ENCODE measurements at regions of chr13 and their contacts with region 1.

Region 1: DNA sequence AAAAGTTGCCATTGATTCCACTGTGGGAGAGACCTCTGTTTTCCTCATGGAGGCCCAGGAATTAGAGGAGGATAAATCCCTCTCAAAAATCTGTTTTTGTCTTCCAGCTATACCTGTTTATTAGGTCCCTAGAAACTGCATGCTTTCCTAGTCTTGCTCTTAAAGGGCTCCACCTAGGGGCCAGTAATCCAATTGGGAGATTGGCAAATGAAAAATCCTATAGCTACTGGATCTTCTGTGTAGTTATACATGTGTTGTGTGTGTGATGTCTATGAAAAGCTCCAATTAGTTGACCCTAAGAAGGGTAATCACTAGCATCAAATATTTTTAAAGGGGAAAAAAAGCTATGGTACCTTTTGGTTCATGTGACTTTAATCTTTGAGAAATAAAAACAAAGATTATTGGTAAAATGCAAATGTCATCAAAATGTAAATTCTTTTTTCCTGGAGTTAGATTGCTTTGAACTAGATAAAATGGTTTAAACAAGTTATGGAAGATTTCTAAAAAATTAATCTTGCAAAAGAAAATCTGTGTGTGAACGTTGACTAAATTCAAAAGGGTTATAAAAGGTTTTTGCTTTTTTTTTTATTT is 63.4 kb upstream of the C1QTNF9B start:
- DNase-seq: no peak
- H3K4me3 ChIP-seq: no peak overlapping the region
- H3K27ac ChIP-seq: no peak overlapping the region
- H3K27me3 ChIP-seq: no peaks in the 10 kb centered on the region
- CTCF ChIP-seq: peak; percentile 94

Region 2: GRCh38 chr13:23579072-23579895 is 381.4 kb before region 1 on chr13:
- CTCF ChIA-PET with region 1: no interaction called
- POLR2A ChIA-PET with region 1: no interaction called
- DNase-seq: peak; percentile 53
- H3K4me3 ChIP-seq: peak overlapping the region; percentile 84
- H3K27ac ChIP-seq: peak overlapping the region; percentile 53
- H3K27me3 ChIP-seq: no peaks in the 10 kb centered on the region
- CTCF ChIP-seq: no peak

Region 3: GRCh38 chr13:23921451-23921888 is 39.2 kb before region 1 on chr13:
- CTCF ChIA-PET with region 1: interaction called, 29 read pairs
- POLR2A ChIA-PET with region 1: interaction called, 3 read pairs
- DNase-seq: peak; percentile 6
- H3K4me3 ChIP-seq: no peak overlapping the region
- H3K27ac ChIP-seq: no peak overlapping the region
- H3K27me3 ChIP-seq: no peaks in the 10 kb centered on the region
- CTCF ChIP-seq: peak; percentile 72

Region 4: DNA sequence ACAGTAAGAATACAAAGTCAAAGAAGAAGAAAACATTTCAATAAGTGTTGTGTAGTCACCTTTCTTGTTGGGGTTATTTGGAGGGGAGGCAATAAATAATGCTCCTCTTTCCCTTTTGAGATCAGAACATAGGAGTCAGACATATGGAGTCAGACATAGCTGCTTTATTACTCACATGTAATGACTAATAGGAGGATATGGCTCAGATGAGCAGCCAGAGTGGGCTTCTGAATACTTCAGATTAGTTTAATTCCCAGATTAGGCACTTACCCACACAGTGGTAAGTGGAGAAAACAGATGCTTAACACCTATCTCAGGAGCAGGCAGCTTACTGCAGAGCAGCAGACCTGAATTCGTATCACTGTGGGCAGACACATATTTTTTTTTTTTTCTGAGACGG is 31.7 kb before region 1 on chr13:
- CTCF ChIA-PET with region 1: interaction called, 37 read pairs
- POLR2A ChIA-PET with region 1: interaction called, 3 read pairs
- DNase-seq: peak; percentile 42
- H3K4me3 ChIP-seq: no peak overlapping the region
- H3K27ac ChIP-seq: no peak overlapping the region
- H3K27me3 ChIP-seq: no peaks in the 10 kb centered on the region
- CTCF ChIP-seq: no peak

Region 5: GRCh38 chr13:23980160-23980551 is 19.5 kb after region 1 on chr13:
- CTCF ChIA-PET with region 1: interaction called, 40 read pairs
- POLR2A ChIA-PET with region 1: no interaction called
- DNase-seq: peak; percentile 46
- H3K4me3 ChIP-seq: peak overlapping the region; percentile 81
- H3K27ac ChIP-seq: peak overlapping the region; percentile 91
- H3K27me3 ChIP-seq: no peaks in the 10 kb centered on the region
- CTCF ChIP-seq: no peak

Region 6: GRCh38 chr13:24005755-24006281 is 45.2 kb after region 1 on chr13:
- CTCF ChIA-PET with region 1: interaction called, 13 read pairs
- POLR2A ChIA-PET with region 1: no interaction called
- DNase-seq: no peak
- H3K4me3 ChIP-seq: no peak overlapping the region
- H3K27ac ChIP-seq: no peak overlapping the region
- H3K27me3 ChIP-seq: no peaks in the 10 kb centered on the region
- CTCF ChIP-seq: no peak

Region 7: DNA sequence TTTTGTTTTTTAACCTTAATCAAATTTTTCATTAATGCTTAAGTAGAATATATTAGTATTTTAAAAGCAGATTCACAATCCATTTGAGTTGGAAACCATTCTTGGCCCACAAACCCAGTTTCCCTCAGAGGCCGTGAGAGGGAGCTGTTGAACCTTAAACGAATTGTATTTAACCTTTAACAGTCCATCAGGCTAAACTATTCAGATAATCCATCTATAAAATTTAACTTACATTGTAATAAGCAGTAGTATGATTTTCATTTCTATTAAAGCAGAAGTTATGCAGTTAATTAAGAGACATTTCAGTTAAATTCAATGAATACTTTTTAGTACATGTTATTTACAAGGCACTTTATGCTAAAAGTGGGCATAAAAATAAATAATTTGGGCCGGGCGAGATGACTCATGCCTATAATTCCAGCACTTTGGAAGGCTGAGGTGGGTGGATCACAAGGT is 59.7 kb after region 1 on chr13:
- CTCF ChIA-PET with region 1: interaction called, 16 read pairs
- POLR2A ChIA-PET with region 1: no interaction called
- DNase-seq: peak; percentile 54
- H3K4me3 ChIP-seq: no peak overlapping the region
- H3K27ac ChIP-seq: no peak overlapping the region
- H3K27me3 ChIP-seq: no peaks in the 10 kb centered on the region
- CTCF ChIP-seq: peak; percentile 88

Region 8: GRCh38 chr13:24033527-24034302 is 73.1 kb after region 1 on chr13:
- CTCF ChIA-PET with region 1: interaction called, 11 read pairs
- POLR2A ChIA-PET with region 1: no interaction called
- DNase-seq: peak; percentile 88
- H3K4me3 ChIP-seq: no peak overlapping the region
- H3K27ac ChIP-seq: peak overlapping the region; percentile 88
- H3K27me3 ChIP-seq: no peaks in the 10 kb centered on the region
- CTCF ChIP-seq: no peak